Dendritic cell treated with granulocyte-macrophage colony-stimulating factor and Interleukin-4, amounts not matched to agents 40 ng/mL and 50 ng/mL, for 4 days (primary cell): ENCODE measurements at regions of chr2 and their contacts with region 1.

Region 1: GRCh38 chr2:27133905-27134780 is at the start of gene PREB:
- H3K4me3 Mint-ChIP-seq: peak within 1 kb of the TSS; percentile 95
- H3K27ac Mint-ChIP-seq: peak within 1 kb of the TSS; percentile 93
- H3K4me1 Mint-ChIP-seq: peaks cover 20% of the 10 kb centered on the region
- H3K27me3 Mint-ChIP-seq: peaks cover 2% of the 10 kb centered on the region

Region 2: GRCh38 chr2:26838121-26838906 is 295.8 kb before region 1 on chr2:
- intact Hi-C with region 1: no loop called
- H3K4me3 Mint-ChIP-seq: no peak overlapping the region
- H3K27ac Mint-ChIP-seq: no peak overlapping the region
- H3K4me1 Mint-ChIP-seq: no peaks in the 10 kb centered on the region
- H3K27me3 Mint-ChIP-seq: peaks cover 49% of the 10 kb centered on the region

Region 3: DNA sequence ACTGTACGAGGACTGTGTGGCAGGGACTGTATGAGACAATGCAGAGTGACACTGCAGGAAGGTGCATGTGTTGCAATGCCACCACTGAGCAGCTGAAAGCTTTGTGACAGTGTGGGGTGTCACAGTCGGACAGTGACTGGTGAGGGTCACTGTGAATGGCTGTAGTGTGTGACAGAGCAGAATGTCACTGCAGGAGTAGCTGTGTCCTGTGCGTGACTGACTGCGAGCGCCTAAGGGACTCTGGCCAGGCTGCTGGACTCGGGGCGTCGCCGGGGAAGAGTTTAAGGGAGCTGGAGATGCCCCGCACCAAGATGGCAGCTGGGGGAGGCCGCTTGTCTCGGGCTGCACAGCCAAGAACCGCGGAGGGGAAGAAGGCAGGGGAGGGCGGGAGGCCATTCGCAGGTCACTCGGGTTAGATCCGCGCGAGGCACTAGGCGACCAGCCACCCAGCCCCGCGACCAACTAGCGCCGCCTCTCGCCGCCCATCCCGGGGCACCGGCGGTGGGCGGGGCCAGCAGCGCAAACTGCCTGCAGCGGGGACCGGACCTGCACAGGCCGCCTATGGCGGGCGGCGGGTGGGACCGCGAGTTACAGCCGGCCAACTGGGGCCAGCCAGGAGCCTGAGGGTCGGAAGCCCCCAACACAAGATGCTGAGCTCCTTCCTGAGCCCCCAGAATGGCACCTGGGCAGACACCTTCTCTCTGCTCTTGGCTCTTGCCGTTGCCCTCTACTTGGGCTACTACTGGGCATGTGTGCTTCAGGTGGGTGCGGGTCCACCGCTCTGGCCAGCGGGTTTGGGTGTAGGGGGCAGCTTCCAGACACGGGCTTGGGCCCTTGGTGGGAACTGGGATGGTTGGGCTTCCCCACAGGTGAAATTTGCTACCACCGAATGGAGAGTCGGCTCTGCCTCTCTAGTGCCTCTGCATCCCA is 10.6 kb before region 1 on chr2 and contains the start of gene ABHD1:
- intact Hi-C with region 1: loop called (anchors 1 kb)
- H3K4me3 Mint-ChIP-seq: peak within 1 kb of the TSS; percentile 83
- H3K27ac Mint-ChIP-seq: peak within 1 kb of the TSS; percentile 88
- H3K4me1 Mint-ChIP-seq: peaks cover 27% of the 10 kb centered on the region
- H3K27me3 Mint-ChIP-seq: peaks cover 16% of the 10 kb centered on the region

Region 4: GRCh38 chr2:27211829-27212627 is 77.9 kb after region 1 on chr2 and contains the starts of genes ATRAID and SLC5A6:
- intact Hi-C with region 1: loop called (anchors 2 kb)
- H3K4me3 Mint-ChIP-seq: peak within 1 kb of the TSS; percentile 91
- H3K27ac Mint-ChIP-seq: peak within 1 kb of the TSS; percentile 93
- H3K4me1 Mint-ChIP-seq: peaks cover 37% of the 10 kb centered on the region
- H3K27me3 Mint-ChIP-seq: no peaks in the 10 kb centered on the region